Mammary epithelial cell (primary cell): ENCODE measurements at regions of chr17 and their contacts with region 1.

Region 1: DNA sequence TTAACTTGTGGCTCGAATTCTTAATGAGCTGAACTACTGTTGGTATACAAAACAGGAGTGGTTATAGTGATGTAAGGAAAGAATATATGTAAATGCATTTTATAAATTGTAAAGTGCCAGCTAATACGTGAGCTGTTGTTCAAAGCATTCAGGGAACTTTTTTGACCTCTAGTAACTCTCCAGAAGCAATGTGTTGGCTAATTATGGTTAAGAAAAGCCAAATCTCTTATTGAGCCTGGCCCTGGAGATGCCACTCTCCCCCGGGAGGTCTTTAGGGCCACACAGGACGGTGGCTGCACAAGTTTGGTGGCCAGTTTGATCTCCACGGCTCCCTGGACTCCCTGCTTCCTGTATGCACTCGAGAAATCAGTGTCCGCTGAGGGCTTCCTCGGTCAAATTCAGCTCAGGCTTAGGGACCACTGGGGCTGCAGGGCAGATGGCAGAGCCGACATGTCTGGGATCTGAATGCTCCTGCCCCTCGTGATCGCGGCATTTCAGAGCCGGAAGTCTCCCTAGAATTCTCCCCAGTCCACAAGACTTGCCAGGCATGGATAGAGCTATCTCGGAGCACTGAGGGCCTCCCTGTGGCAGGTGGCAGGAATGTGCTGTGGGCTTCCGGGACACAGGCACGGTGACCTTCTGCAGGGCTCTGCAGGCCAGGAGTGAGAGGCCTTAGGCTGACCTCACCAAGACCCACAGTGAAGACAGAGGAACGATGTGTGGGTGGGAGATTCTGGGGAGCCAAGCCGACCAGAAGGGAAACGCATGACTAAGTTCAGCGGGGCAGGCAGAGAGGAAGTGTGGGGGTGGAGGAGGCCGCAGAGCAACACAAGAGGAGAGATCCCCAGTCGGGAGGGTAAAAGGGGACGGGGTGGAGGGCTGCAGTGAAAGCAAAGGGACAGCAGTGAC is 18.6 kb upstream of the PITPNM3 start:
- DNase-seq: peak; percentile 55
- H3K4me3 ChIP-seq: no peak overlapping the region
- H3K27ac ChIP-seq: no peak overlapping the region
- H3K4me1 ChIP-seq: peaks cover 33% of the 10 kb centered on the region
- H3K27me3 ChIP-seq: no peaks in the 10 kb centered on the region
- CTCF ChIP-seq: peak in 1 of 2 donors; percentile 28

Region 2: DNA sequence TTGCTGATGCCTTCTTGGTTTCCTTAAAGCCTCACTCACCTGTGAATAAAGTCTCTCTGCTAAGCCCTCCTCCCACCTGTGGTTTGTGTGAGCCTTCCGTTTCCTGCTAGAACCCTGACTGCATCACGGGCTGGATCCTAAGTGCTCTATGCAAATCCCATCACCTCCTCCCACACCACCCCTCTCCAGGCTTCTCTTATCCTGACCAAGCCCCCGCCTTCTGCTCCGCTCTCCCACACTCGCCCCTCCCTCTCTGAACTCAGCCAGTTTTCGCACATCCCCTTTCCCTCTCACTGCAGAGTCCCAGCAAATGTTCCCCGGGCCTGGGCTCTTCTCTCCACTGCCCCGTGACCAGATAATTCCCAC is 78.8 kb before region 1 on chr17:
- CTCF ChIA-PET with region 1: no interaction called
- dilution Hi-C with region 1: no loop called
- in situ Hi-C with region 1: loop called in 1 of 2 experiments (anchors 25 kb)
- intact Hi-C with region 1: no loop called
- DNase-seq: no peak
- H3K4me3 ChIP-seq: no peak overlapping the region
- H3K27ac ChIP-seq: no peak overlapping the region
- H3K4me1 ChIP-seq: no peaks in the 10 kb centered on the region
- H3K27me3 ChIP-seq: no peaks in the 10 kb centered on the region
- CTCF ChIP-seq: no peak